CD4-positive, alpha-beta T cell (primary cell): ENCODE measurements at regions of chr1 and their contacts with region 1.

Region 1: GRCh38 chr1:221478050-221478949 is 263.6 kb downstream of the DUSP10 start:
- DNase-seq: peak; percentile 16 to 71 (median 50)
- ATAC-seq: peak; percentile 79
- H3K4me3 ChIP-seq: no peak overlapping the region
- H3K4me3 Mint-ChIP-seq: no peak overlapping the region
- H3K27ac ChIP-seq: no peak overlapping the region
- H3K27ac Mint-ChIP-seq: no peak overlapping the region
- H3K4me1 ChIP-seq: peaks cover 4% of the 10 kb centered on the region
- H3K4me1 Mint-ChIP-seq: no peaks in the 10 kb centered on the region
- H3K27me3 ChIP-seq: no peaks in the 10 kb centered on the region
- H3K27me3 Mint-ChIP-seq: peaks cover 5% of the 10 kb centered on the region
- CTCF ChIP-seq: peak; percentile 76

Region 2: DNA sequence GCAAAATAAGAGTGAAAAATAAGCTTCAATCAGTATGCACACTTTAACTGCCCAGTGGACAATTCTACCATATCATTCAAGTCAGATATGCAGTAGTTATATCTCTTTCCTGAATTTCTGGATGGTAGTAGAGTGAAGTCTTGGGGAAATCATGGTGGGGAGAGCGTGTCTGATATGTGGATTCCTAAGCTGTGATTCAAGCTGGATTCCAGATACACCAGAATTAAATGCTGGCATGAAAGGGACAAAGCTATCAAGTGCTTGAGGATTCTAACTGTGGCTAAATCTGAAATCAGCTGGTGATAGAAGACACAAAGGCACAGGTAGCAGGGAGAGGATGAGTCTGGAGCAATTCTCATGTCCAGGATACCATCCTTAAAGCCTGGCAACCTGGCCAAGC is 60.0 kb before region 1 on chr1:
- CTCF ChIA-PET with region 1: no interaction called
- POLR2A ChIA-PET with region 1: no interaction called
- intact Hi-C with region 1: no loop called
- DNase-seq: no peak
- ATAC-seq: no peak
- H3K4me3 ChIP-seq: no peak overlapping the region
- H3K4me3 Mint-ChIP-seq: no peak overlapping the region
- H3K27ac ChIP-seq: no peak overlapping the region
- H3K27ac Mint-ChIP-seq: no peak overlapping the region
- H3K4me1 ChIP-seq: no peaks in the 10 kb centered on the region
- H3K4me1 Mint-ChIP-seq: no peaks in the 10 kb centered on the region
- H3K27me3 ChIP-seq: peaks cover 0 to 3% of the 10 kb centered on the region in 2 experiments
- H3K27me3 Mint-ChIP-seq: peaks cover 18% of the 10 kb centered on the region
- CTCF ChIP-seq: no peak

Region 3: DNA sequence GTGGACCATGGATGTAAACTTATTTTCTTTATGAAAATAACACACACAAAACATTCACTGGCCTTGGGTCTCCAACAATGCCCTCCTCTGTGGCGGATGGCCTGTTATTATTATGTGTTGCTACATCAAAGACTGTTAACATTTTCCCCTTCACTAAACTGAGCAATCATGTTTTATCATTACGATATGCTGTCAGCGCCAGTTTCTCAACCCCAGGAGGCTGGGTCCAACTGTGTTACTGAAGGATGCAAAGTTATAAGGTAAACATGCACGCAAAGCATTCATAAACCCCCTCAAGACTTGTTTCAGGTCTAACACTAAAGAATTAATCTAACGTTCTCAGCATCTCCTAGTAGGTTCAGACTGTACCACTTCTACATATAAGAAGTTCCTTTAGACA is 269.5 kb after region 1 on chr1:
- CTCF ChIA-PET with region 1: interaction called, 12 read pairs
- POLR2A ChIA-PET with region 1: no interaction called
- intact Hi-C with region 1: loop called in 1 of 2 experiments (anchors 5 kb)
- DNase-seq: no peak
- ATAC-seq: no peak
- H3K4me3 ChIP-seq: no peak overlapping the region
- H3K4me3 Mint-ChIP-seq: no peak overlapping the region
- H3K27ac ChIP-seq: no peak overlapping the region
- H3K27ac Mint-ChIP-seq: no peak overlapping the region
- H3K4me1 ChIP-seq: peaks cover 7% of the 10 kb centered on the region
- H3K4me1 Mint-ChIP-seq: peaks cover 7% of the 10 kb centered on the region
- H3K27me3 ChIP-seq: no peaks in the 10 kb centered on the region
- H3K27me3 Mint-ChIP-seq: no peaks in the 10 kb centered on the region
- CTCF ChIP-seq: no peak

Region 4: DNA sequence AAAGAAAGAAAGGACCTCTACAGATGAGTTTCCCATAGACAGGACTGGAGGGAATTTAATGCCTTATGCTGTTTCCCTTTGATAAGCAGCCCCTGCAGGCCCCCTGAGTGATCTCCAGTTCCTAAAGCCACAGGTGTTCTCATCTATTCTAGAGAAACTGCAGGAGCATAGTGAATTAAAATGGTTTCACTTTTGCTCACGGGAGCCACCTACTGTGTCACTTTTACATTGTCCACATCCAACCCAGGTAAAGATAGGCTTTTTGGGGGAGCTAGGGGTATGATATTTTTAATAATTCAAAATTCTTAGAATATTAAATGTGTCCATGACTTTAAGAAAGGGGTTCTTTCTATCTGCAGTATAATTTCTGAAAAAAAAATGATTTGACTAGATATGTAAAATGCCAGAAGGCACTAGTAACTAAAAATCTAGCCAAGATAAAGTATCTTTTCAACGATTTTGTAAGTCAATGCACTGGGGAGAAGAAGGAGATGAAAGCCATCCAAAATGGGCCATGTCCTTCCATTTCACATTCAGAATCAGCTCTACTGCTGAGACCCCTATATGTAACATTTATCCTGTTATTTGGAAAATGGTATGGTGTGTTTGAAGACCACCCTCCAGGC is 530.9 kb after region 1 on chr1:
- CTCF ChIA-PET with region 1: interaction called, 3 read pairs
- POLR2A ChIA-PET with region 1: interaction called, 4 read pairs
- intact Hi-C with region 1: loop called (anchors 1 to 2 kb)
- DNase-seq: peak in 10 of 14 experiments; percentile 2 to 58 (median 14)
- ATAC-seq: no peak
- H3K4me3 ChIP-seq: no peak overlapping the region
- H3K4me3 Mint-ChIP-seq: no peak overlapping the region
- H3K27ac ChIP-seq: no peak overlapping the region
- H3K27ac Mint-ChIP-seq: no peak overlapping the region
- H3K4me1 ChIP-seq: no peaks in the 10 kb centered on the region
- H3K4me1 Mint-ChIP-seq: no peaks in the 10 kb centered on the region
- H3K27me3 ChIP-seq: no peaks in the 10 kb centered on the region
- H3K27me3 Mint-ChIP-seq: peaks cover 4% of the 10 kb centered on the region
- CTCF ChIP-seq: peak; percentile 40